ENCODE measurements at regions of chr11 and their contacts with region 1.

Region 1: DNA sequence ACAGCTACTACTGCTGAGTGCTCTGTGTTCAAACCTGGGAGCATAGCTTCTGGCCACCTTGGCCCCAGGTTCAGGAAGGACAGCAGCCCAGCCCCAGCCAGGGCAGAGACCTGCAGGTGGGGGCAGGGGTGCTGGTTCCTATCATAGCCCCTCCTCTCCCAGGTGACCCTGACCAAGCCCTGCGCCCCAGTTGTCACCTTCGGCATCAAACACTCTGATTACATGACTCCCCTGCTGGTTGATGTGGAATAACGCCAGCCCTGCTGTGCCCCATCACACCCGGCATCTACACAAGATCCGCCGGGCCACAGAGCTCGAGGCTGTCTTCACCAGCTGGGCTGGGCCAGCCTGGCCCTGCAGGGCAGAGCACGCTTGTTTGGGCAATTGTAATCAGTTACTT is 6.9 kb downstream of the SCGB1C1 start:
- DNase-seq: no peak
- ATAC-seq: peak in 1 of 4 donors; percentile 11
- H3K4me3 ChIP-seq: no peak overlapping the region
- H3K27ac ChIP-seq: no peak overlapping the region
- H3K4me1 ChIP-seq: no peaks in the 10 kb centered on the region
- H3K27me3 ChIP-seq: no peaks in the 10 kb centered on the region
- CTCF ChIP-seq: no peak
- POLR2A ChIP-seq: no peak

Region 2: DNA sequence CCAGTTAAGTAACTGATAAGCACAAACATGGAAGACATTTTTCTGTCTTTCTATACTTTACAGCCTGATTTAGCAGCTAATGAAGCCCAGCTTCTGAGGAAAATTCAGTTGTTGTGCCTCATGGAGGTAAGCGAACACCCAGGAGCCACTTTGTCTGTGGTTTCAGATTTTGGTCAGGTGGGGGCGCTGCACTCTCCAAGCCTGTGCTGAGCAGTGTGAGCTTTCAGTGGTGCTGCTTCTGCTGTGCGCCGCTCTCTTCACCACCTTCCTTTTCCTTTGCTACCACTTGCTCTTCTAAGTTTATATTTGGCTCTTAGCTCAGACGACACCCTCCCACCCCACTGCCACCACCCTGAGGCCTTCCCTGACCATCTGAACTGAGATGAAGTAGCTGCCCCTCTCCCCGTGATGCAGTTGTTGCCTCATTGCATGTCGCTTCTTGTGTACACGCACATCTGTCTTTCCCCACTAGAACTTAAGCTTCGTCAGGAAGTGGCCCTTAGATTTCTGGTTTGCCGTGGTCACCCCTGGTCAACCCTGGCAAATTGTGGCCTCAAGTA is 51.0 kb after region 1 on chr11:
- intact Hi-C with region 1: loop called in 1 of 2 experiments (anchors 5 kb)
- DNase-seq: peak in 1 of 3 donors; percentile 50
- ATAC-seq: peak; percentile 75 to 85 (median 80)
- H3K4me3 ChIP-seq: no peak overlapping the region
- H3K27ac ChIP-seq: no peak overlapping the region
- H3K4me1 ChIP-seq: no peaks in the 10 kb centered on the region
- H3K27me3 ChIP-seq: no peaks in the 10 kb centered on the region
- CTCF ChIP-seq: peak; percentile 50 to 65 (median 58)
- POLR2A ChIP-seq: no peak

Region 3: DNA sequence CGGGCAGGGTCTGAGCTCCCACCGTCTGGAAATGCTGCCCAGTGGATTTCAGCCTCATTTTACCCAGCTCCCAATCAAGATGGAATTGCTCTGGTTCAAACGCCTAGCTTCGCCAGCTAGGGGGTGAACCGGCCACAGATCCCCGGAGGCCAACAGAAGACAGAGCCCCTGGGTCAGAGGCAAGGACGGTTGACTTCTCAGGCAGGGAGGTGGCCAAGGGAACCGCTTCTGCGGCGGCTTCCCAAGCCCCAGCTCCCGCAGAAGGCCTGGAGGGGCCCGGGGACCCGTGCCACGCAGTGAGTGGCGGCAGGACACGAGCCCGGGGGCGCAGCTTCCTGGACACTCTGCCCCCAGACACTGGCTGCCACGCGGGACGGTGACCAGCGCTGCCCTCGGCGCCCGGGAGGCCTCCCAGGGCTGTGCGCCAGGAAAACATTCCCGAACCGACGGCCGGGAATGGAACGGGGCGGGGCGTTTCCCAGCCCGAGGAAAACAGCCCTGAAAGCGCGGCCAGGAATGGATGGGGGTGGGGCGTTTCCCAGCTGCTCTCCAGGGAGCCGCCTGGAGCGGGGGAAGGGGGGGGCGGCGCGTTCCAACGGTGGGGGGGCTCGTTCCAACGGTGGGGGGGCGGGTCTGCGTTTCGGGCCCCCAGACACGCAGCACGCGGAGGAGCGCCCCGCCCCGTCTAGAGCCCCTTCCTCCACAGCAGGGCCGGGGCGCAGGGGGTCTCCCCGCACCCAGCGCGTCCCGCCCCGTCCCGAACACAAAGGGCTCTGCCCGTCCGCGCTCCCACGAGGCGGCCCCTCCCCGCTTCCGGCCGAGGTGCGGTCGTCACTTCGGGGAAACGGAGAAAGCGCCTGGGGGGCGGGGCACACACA is 156.0 kb after region 1 on chr11:
- intact Hi-C with region 1: no loop called
- DNase-seq: peak; percentile 97 to 99 (median 97)
- ATAC-seq: peak; percentile 71 to 84 (median 78)
- H3K4me3 ChIP-seq: peak overlapping the region; percentile 29 to 46 (median 34)
- H3K27ac ChIP-seq: peak overlapping the region; percentile 99 to 100 (median 100)
- H3K4me1 ChIP-seq: peaks cover 3 to 34% (median 14%) of the 10 kb centered on the region in 4 donors
- H3K27me3 ChIP-seq: no peaks in the 10 kb centered on the region
- CTCF ChIP-seq: no peak
- POLR2A ChIP-seq: peak; percentile 90

Region 4: DNA sequence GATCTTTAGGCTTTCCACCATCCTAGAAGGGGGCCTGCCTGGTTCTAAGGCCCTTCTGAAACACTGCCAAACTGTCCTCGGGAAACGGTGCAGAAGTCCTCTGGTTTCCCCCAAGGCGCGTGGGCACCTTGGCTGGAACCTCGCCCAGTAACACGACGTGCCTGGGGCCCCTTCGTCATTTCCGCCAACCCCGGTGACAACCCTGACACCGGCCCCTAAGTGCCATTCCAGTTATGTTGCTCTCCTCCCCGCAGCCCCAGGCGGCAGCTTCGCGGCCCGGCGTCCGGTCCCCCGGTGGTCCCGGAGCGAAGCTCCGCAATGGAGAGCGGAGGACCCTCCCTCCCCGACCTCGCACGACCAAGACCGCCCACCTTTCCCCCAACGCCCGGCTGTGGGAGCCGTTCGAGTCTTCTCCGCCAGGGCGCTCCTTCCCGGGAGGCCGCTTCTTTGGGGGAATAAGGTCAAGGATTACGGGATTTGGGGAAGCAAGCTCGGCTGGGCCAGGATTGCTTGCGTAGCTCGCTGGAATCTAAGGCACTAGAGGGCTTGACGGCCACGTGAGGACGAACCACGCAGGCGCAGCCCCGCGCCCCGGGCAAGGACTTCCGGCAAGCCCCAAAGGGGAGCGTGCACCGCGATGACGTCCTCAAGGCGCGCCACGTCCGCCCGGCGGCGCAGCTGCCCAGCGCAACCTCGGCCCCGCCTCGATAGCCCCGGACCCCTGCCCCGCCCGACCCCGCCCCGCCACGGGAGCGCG is 306.6 kb after region 1 on chr11:
- intact Hi-C with region 1: no loop called
- DNase-seq: peak; percentile 99
- ATAC-seq: peak; percentile 80 to 87 (median 84)
- H3K4me3 ChIP-seq: peak overlapping the region; percentile 85 to 100 (median 88)
- H3K27ac ChIP-seq: peak overlapping the region; percentile 96 to 100 (median 98)
- H3K4me1 ChIP-seq: peaks cover 0 to 21% (median 8%) of the 10 kb centered on the region in 4 donors
- H3K27me3 ChIP-seq: no peaks in the 10 kb centered on the region
- CTCF ChIP-seq: peak in 1 of 4 donors; percentile 17
- POLR2A ChIP-seq: peak; percentile 90

Region 5: DNA sequence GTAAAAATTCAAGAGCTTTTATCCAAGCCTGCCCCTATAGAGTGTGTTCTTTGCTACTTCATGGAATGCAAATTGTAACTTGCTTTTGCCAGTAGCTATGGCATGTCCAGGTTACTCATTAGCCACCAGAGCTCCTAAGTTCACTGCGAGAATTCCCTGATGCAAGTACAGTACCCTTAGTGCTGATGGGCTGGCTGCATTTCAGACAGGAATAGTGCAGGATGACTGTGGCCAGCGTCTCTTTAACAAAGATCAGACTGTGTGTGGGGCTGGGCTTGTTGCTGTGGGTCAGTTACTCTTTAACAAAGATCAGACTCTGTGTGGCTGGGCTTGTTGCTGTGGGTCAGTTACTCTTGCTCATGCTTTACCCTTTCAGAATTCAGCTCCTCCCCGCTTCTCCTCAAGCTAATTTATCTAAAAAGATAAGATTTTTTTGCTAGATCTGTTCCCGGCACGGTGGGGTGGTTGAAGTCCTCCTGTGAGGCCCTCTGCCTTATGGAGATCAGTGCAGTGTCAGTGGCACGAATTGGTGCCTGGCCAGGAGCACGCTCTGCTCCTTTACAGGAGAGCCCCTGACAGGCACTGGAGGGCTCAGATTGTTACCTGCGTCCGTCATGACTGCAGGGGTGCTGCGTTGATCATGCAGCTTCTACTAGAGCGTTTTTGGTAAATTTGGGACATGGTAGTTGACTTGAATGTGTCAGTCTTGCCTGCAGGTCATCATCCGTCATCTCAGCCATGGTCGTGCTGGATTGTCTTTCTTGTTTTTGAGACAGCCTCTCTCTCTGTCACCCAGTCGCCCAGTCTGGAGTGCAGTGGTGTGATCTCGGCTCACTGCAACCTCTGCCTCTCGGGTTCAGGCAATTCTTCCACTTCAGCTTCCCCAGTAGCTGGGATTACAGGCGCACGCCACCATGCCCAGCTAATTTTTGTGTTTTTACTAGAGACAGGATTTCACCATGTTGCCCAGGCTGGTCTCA is 752.9 kb after region 1 on chr11:
- intact Hi-C with region 1: no loop called
- DNase-seq: peak; percentile 75 to 94 (median 84)
- ATAC-seq: peak; percentile 88 to 94 (median 91)
- H3K4me3 ChIP-seq: peak overlapping the region in 2 of 3 donors; percentile 35 to 38
- H3K27ac ChIP-seq: peak overlapping the region; percentile 21 to 86 (median 60)
- H3K4me1 ChIP-seq: peaks cover 0 to 47% (median 19%) of the 10 kb centered on the region in 4 donors
- H3K27me3 ChIP-seq: no peaks in the 10 kb centered on the region
- CTCF ChIP-seq: no peak
- POLR2A ChIP-seq: peak; percentile 49